AG04450 (cell line): ENCODE measurements at regions of chr6 and their contacts with region 1.

Region 1: GRCh38 chr6:142474531-142475289 is 172.9 kb downstream of the ADGRG6 start:
- DNase-seq: peak; percentile 44
- H3K4me3 ChIP-seq: no peak overlapping the region
- H3K27ac ChIP-seq: no peak overlapping the region
- H3K27me3 ChIP-seq: no peaks in the 10 kb centered on the region
- CTCF ChIP-seq: peak; percentile 59

Region 2: DNA sequence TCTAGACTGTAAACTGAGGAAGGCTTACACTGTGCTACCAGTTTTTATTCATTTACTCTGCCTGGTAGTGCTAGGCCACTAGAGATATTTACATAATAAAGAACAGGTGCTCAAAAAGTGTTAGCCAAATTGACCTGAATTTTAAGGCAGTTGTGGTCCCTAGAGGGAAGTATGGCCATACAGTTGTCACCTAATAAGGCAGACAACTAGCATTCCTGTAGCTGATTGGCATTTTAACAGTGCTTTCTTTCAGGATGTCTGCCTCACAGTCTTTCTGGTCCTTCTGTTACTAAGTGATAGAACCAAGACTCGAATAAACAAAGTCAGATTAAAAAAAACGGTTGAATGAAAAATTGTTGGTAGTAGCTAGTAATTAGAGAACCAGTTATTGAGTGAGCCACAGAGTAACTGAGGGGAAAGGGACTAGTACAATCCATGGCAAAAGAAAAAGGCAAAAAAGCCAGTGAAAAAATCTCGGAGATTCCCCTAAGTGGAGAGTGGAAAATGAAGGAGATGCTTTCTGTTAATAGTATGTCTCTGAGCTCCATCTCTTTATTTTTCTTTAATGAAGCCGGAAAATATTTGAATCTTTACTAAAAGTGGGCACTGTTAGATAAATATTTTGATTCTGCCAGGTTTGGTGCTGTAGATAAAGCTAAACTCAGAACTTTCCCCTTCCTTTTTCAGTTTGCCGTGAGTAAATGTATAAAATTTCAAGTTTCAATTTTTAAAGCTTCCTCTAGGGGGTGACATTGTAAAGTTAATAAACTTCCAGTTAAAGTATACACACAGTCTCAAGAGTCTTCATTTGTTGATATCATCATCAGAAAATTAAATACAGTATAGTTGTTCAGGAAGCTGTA is 318.6 kb before region 1 on chr6:
- CTCF ChIA-PET with region 1: interaction called, 30 read pairs
- POLR2A ChIA-PET with region 1: no interaction called
- DNase-seq: no peak
- H3K4me3 ChIP-seq: no peak overlapping the region
- H3K27ac ChIP-seq: no peak overlapping the region
- H3K27me3 ChIP-seq: no peaks in the 10 kb centered on the region
- CTCF ChIP-seq: peak; percentile 38; the same call in 1 of the 2 replicates

Region 3: DNA sequence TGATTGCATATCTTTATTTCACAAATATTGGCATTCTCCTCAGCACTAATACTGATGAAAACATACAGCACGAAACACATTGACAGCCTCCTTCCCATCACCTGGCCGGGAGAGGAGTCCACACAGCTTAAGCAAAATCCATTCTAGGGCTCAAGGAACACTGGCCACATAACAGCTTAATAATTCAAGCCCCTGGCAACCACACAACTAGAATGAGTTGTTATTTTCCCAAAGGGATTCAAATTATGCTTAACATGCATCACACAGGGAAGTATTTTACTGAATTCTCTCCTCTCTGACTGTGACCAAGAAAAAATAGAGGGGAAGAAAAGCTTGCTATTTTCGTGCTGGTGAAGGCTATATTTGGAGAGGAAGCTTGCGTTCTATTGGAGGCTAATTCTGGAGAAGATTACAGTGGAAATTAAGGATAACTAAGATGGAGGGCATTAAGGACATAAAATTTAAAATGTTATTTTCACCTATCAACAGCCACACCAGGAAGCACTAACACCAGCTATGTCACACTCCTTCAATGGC is 25.6 kb after region 1 on chr6:
- CTCF ChIA-PET with region 1: interaction called, 10 read pairs
- POLR2A ChIA-PET with region 1: no interaction called
- DNase-seq: no peak
- H3K4me3 ChIP-seq: no peak overlapping the region
- H3K27ac ChIP-seq: no peak overlapping the region
- H3K27me3 ChIP-seq: no peaks in the 10 kb centered on the region
- CTCF ChIP-seq: no peak

Region 4: DNA sequence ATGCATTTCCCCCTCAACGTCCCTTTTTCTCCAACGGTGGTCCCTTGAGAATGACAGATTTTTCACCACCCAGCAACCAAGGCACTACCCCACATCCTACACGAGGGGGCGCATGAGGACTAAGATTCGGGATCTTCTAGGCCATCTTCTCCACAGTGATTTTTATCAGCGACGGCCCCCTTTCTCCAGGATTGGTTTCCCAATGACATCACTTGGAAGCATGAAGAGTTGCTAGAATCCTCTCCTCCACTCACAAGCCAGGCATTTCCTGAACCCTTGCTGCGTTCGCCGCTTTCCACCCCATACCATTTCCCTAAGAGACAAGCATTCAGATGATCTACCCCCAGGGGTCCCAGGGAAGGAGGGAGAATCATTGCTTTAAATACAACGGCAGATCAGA is 218.2 kb after region 1 on chr6:
- CTCF ChIA-PET with region 1: interaction called, 27 read pairs
- POLR2A ChIA-PET with region 1: no interaction called
- DNase-seq: peak; percentile 74
- H3K4me3 ChIP-seq: no peak overlapping the region; the same call in 1 of the 2 replicates
- H3K27ac ChIP-seq: peak overlapping the region; percentile 58
- H3K27me3 ChIP-seq: no peaks in the 10 kb centered on the region
- CTCF ChIP-seq: peak; percentile 95

Region 5: DNA sequence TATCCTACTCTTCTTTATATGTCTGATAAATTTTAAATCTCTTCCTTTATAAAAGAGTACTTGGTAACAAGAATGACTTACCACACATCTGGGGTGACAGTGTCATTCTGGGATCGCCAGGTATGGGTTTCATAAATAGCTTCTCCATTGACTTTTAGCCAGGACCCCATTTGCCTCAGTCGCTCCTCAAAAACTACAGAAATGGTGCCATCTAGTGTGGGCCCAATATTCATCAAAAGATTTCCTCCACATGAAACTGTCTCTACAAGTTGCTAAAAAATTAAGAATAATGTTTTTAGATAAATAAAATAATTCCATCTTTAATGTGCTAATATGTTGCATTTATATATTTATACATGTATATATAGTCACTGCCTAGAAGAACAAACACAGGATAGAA is 1027.1 kb after region 1 on chr6:
- CTCF ChIA-PET with region 1: interaction called, 11 read pairs
- POLR2A ChIA-PET with region 1: no interaction called
- DNase-seq: no peak
- H3K4me3 ChIP-seq: no peak overlapping the region
- H3K27ac ChIP-seq: no peak overlapping the region
- H3K27me3 ChIP-seq: no peaks in the 10 kb centered on the region
- CTCF ChIP-seq: no peak